ENCODE measurements at regions of chr3 and their contacts with region 1.

Region 1: GRCh38 chr3:170021083-170021482 is 16.7 kb upstream of the GPR160 start:
- DNase-seq: no peak
- H3K4me3 Mint-ChIP-seq: no peak overlapping the region
- H3K27ac Mint-ChIP-seq: no peak overlapping the region
- H3K4me1 Mint-ChIP-seq: peaks cover 40% of the 10 kb centered on the region
- H3K27me3 Mint-ChIP-seq: no peaks in the 10 kb centered on the region
- CTCF ChIP-seq: peak; percentile 7

Region 2: GRCh38 chr3:169907463-169907862 is 113.6 kb before region 1 on chr3:
- CTCF ChIA-PET with region 1: no interaction called
- intact Hi-C with region 1: no loop called
- DNase-seq: no peak
- H3K4me3 Mint-ChIP-seq: no peak overlapping the region
- H3K27ac Mint-ChIP-seq: no peak overlapping the region
- H3K4me1 Mint-ChIP-seq: no peaks in the 10 kb centered on the region
- H3K27me3 Mint-ChIP-seq: peaks cover 14% of the 10 kb centered on the region
- CTCF ChIP-seq: no peak

Region 3: GRCh38 chr3:169945313-169945712 is 75.8 kb before region 1 on chr3:
- CTCF ChIA-PET with region 1: interaction called, 10 read pairs
- intact Hi-C with region 1: no loop called
- DNase-seq: no peak
- H3K4me3 Mint-ChIP-seq: no peak overlapping the region
- H3K27ac Mint-ChIP-seq: no peak overlapping the region
- H3K4me1 Mint-ChIP-seq: no peaks in the 10 kb centered on the region
- H3K27me3 Mint-ChIP-seq: peaks cover 1% of the 10 kb centered on the region
- CTCF ChIP-seq: no peak

Measured in Calu3 (cell line).